HCT116 (cell line): ENCODE measurements at regions of chr18 and their contacts with region 1.

Region 1: GRCh38 chr18:76349067-76349715 is 145.9 kb downstream of the ZNF516 start:
- DNase-seq: peak; percentile 46
- ATAC-seq: peak; percentile 75
- H3K4me3 ChIP-seq: no peak overlapping the region
- H3K27ac ChIP-seq: no peak overlapping the region
- H3K4me1 ChIP-seq: no peaks in the 10 kb centered on the region
- H3K27me3 ChIP-seq: no peaks in the 10 kb centered on the region
- CTCF ChIP-seq: peak; percentile 59 to 91 (median 87); a peak in 5 of 6 replicates
- POLR2A ChIP-seq: no peak
- RAD21 ChIP-seq: peak; percentile 84

Region 2: GRCh38 chr18:75896865-75897264 is 452.3 kb before region 1 on chr18:
- CTCF ChIA-PET with region 1: no interaction called
- POLR2A ChIA-PET with region 1: no interaction called
- RAD21 ChIA-PET with region 1: no interaction called
- intact Hi-C with region 1: loop called (anchors 10 kb)
- DNase-seq: peak; percentile 22
- ATAC-seq: peak; percentile 80
- H3K4me3 ChIP-seq: no peak overlapping the region
- H3K27ac ChIP-seq: no peak overlapping the region
- H3K4me1 ChIP-seq: no peaks in the 10 kb centered on the region
- H3K27me3 ChIP-seq: no peaks in the 10 kb centered on the region
- CTCF ChIP-seq: peak in 2 of 3 experiments; percentile 31 to 41; a peak in 4 of 6 replicates
- POLR2A ChIP-seq: no peak
- RAD21 ChIP-seq: peak; percentile 40; the same call in 1 of the 2 replicates